MCF 10A (cell line): ENCODE measurements at regions of chr7 and their contacts with region 1.

Region 1: DNA sequence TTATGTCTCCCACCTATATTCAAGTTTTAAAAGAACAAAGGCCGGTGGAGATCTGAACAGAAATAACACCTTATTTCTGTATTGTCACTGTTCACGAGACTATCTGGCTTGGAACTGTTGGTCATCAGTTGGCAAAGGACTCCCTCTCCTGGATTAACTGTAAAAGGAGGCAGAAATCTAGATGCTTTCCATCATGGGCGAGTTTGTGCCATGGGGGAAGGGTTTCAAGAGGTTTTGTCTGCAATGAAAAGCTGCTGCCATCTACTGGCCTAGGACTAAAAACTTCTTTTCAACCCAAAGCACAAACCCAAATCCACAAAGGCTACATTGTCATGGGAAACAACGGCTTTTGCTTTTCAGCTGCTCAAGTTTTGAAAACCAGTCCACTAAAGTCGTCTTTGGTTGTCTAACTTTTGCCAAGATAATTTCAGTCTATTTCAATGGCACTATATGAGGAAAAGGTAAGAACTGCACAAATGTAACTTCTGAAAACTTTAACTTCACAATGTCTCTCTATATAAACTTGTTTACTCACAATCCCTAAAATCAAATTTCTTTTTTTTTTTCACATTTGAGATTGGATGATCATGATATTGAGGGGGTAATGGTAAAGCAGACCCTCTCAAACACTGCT is 196.8 kb downstream of the SKAP2 start:
- DNase-seq: peak; percentile 96
- H3K4me3 Mint-ChIP-seq: no peak overlapping the region
- H3K27ac Mint-ChIP-seq: no peak overlapping the region
- H3K4me1 Mint-ChIP-seq: peaks cover 16% of the 10 kb centered on the region
- H3K27me3 Mint-ChIP-seq: no peaks in the 10 kb centered on the region
- CTCF ChIP-seq: peak; percentile 90

Region 2: DNA sequence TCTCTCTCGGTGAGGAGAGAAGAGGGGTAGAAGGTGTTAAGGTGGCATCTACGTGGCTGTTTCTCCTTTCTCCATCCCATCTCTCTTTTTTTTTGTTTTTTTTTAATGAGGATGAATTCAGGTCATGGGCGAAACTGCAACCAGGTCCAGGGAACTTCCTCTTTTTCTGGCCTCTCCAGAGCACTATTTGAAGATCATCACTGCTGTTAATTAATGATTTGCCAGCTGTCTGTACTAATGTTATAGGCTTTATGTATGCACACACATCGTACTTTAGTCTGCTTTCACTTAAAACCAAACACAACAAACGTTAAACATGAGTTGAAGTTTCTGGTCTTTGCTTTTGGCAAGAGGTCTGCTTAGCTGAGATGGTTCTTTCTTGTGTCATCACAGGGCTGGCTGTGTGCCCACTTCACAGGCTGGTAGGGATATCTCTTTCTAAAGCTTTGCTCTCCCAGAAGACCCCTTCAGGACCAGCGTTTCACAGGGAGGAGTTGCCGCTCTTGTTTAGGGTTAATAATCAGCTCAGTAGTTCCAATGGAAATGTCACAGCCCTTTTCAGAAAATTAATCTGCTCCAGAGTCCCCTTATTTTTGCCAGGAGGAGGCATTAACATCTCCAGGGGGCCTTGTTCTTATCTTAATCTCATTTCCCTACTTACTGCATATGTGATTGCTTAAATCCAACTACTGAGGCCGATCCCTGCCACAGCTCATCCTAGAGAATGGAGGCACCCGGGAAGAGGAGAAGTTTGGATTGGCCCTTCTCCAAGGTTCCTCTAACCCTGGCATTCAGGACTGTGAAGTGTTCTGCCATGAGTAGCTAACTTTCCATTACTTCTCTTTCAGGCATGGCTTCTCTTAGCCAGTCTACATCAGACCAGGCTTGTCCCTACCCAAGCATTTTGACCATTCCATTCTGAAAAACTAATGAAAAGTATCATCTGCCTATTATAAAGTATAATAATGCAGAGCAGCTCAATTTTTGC is 789.5 kb before region 1 on chr7:
- CTCF ChIA-PET with region 1: no interaction called
- POLR2A ChIA-PET with region 1: no interaction called
- intact Hi-C with region 1: loop called (anchors 5 kb)
- DNase-seq: no peak
- H3K4me3 Mint-ChIP-seq: no peak overlapping the region
- H3K27ac Mint-ChIP-seq: no peak overlapping the region
- H3K4me1 Mint-ChIP-seq: no peaks in the 10 kb centered on the region
- H3K27me3 Mint-ChIP-seq: peaks cover 94% of the 10 kb centered on the region
- CTCF ChIP-seq: no peak

Region 3: DNA sequence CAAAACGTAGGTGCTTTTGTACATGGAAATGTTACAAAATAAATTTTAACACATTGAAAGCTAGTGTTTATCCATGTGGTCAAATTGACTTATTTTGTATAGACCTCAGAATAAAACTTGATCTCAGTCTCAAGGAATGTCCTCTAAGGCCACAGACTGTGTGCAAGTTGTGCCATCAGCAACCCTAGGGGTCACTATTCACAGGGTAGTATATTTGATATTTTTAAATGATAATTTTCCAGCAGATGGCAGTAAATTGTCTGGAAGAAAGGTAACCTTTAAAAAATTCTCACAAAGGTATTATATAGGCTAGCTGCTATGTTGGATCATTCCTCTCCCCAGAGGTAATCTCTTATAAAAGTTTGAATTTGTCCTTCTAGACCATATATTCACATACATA is 388.8 kb before region 1 on chr7:
- CTCF ChIA-PET with region 1: no interaction called
- POLR2A ChIA-PET with region 1: no interaction called
- intact Hi-C with region 1: loop called (anchors 5 kb)
- DNase-seq: peak; percentile 41
- H3K4me3 Mint-ChIP-seq: no peak overlapping the region
- H3K27ac Mint-ChIP-seq: no peak overlapping the region
- H3K4me1 Mint-ChIP-seq: no peaks in the 10 kb centered on the region
- H3K27me3 Mint-ChIP-seq: no peaks in the 10 kb centered on the region
- CTCF ChIP-seq: peak; percentile 33

Region 4: GRCh38 chr7:26490650-26491624 is 176.7 kb before region 1 on chr7:
- CTCF ChIA-PET with region 1: interaction called, 28 read pairs
- POLR2A ChIA-PET with region 1: interaction called, 10 read pairs
- intact Hi-C with region 1: no loop called
- DNase-seq: peak; percentile 83
- H3K4me3 Mint-ChIP-seq: peak overlapping the region; percentile 33
- H3K27ac Mint-ChIP-seq: peak overlapping the region; percentile 32
- H3K4me1 Mint-ChIP-seq: peaks cover 20% of the 10 kb centered on the region
- H3K27me3 Mint-ChIP-seq: no peaks in the 10 kb centered on the region
- CTCF ChIP-seq: no peak

Region 5: GRCh38 chr7:26686448-26686981 is 18.9 kb after region 1 on chr7:
- CTCF ChIA-PET with region 1: interaction called, 33 read pairs
- POLR2A ChIA-PET with region 1: no interaction called
- intact Hi-C with region 1: no loop called
- DNase-seq: peak; percentile 51
- H3K4me3 Mint-ChIP-seq: no peak overlapping the region
- H3K27ac Mint-ChIP-seq: no peak overlapping the region
- H3K4me1 Mint-ChIP-seq: peaks cover 3% of the 10 kb centered on the region
- H3K27me3 Mint-ChIP-seq: no peaks in the 10 kb centered on the region
- CTCF ChIP-seq: peak; percentile 59